ENCODE measurements at regions of chr13 and their contacts with region 1.

Region 1: DNA sequence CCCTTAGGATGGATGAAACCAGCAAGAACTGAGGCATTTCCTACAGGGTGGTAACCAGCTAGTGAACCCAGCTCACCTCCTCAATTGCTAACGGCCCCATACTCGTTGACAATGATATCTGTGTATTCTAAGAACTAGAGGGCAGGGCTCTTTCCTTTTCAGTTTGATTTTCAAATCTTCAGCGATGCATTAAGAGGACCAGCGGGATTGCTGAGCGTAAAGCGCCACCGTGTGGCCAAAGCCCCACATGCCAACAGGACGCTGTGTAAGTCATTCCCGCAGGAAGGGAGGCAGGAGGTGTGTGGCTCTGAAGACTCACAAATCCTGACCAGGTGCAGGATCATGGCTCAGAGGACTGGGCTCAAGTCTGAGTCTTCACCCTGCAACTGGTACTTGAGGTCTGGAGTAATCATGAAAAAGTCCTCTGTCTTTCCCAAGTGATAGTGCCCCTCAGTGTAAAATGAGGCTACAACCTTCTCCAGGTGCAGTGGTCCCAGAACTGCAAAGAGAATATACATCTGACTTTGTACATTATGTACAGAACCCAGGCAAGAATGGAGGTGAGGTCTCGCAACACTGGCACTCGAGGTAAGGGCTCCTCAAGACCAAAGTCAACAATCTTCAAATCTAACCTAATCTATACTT is 40.9 kb downstream of the C13orf42 start:
- DNase-seq: peak; percentile 86
- ATAC-seq: peak; percentile 93
- H3K4me3 Mint-ChIP-seq: no peak overlapping the region
- H3K27ac Mint-ChIP-seq: peak overlapping the region; percentile 53
- H3K4me1 Mint-ChIP-seq: peaks cover 45% of the 10 kb centered on the region
- H3K27me3 Mint-ChIP-seq: peaks cover 16% of the 10 kb centered on the region

Region 2: GRCh38 chr13:49976314-49977258 is 1093.5 kb before region 1 on chr13:
- CTCF ChIA-PET with region 1: interaction called, 22 read pairs
- POLR2A ChIA-PET with region 1: no interaction called
- DNase-seq: peak; percentile 81
- ATAC-seq: peak; percentile 81
- H3K4me3 Mint-ChIP-seq: no peak overlapping the region
- H3K27ac Mint-ChIP-seq: no peak overlapping the region
- H3K4me1 Mint-ChIP-seq: peaks cover 4% of the 10 kb centered on the region
- H3K27me3 Mint-ChIP-seq: no peaks in the 10 kb centered on the region

Region 3: GRCh38 chr13:50991579-50992521 is 78.3 kb before region 1 on chr13:
- CTCF ChIA-PET with region 1: interaction called, 15 read pairs
- POLR2A ChIA-PET with region 1: interaction called, 4 read pairs
- DNase-seq: peak; percentile 70
- ATAC-seq: peak; percentile 88
- H3K4me3 Mint-ChIP-seq: peak overlapping the region; percentile 34
- H3K27ac Mint-ChIP-seq: peak overlapping the region; percentile 69
- H3K4me1 Mint-ChIP-seq: peaks cover 27% of the 10 kb centered on the region
- H3K27me3 Mint-ChIP-seq: no peaks in the 10 kb centered on the region

Region 4: DNA sequence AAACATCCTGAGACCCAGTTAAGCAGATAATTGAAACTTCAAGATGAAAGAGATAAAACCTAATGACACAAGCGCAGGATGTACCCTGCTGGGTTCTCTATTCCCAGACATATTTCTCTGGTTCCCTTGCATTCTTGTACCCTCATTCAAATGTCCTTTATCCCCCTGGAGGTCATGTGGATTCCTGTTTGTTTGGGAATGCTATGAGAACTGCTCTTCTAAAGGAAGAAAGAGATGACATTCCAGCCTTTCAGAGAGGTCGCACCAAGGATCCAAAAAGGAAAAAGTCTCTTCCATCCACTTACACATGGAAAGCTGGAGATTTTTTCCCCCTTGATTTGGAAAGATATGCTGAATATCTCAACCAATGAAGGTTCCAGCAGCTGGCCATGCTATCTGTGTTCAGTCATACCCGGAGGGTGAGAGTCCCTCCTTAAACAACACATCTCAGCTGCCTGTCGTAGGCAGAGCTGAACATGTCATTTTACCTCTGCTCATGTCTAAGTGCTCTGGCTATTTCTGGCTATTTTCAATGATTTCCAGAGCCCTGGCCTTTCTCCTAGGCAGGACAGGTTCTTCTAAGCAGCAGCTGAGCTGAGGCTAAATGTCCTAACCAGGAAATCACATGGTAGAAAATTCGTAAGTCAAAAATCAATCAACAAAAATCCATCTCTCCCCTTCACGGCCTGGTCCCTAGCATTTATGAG is 11.5 kb before region 1 on chr13:
- CTCF ChIA-PET with region 1: interaction called, 12 read pairs
- POLR2A ChIA-PET with region 1: no interaction called
- DNase-seq: no peak
- ATAC-seq: no peak
- H3K4me3 Mint-ChIP-seq: no peak overlapping the region
- H3K27ac Mint-ChIP-seq: no peak overlapping the region
- H3K4me1 Mint-ChIP-seq: no peaks in the 10 kb centered on the region
- H3K27me3 Mint-ChIP-seq: peaks cover 7% of the 10 kb centered on the region

Region 5: DNA sequence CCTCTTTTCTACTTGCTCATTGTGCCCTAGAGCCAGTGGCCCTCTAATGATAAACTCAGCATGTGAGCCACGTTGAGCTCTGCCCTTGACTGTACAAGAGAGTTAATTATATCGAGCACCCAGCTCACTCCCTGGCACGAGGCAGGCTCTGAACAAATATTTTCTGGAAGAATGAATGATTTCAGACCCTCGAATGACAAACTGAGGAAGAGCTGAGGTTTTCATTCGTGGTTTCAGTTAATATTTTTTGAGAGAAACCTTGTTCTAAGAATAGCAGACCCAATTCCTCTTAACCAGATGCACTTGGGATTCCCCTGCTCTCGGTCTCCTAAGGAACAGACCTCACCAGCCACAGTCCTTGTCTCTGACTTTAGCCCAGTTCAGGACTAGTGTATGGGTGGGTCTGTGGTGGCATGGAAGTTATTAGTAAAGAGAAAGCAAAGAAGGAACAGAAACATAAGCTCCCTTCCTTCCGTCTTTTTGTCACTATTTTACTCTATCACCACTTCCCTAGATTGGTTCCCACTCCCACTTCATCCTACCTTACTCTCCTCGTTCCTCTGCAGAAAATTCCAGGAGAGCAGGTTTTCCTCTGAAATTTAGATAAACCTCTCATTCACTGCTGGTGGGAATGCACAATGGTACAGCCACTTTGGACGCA is 492.0 kb after region 1 on chr13:
- CTCF ChIA-PET with region 1: no interaction called
- POLR2A ChIA-PET with region 1: no interaction called
- DNase-seq: no peak
- ATAC-seq: peak; percentile 68
- H3K4me3 Mint-ChIP-seq: no peak overlapping the region
- H3K27ac Mint-ChIP-seq: peak overlapping the region; percentile 41
- H3K4me1 Mint-ChIP-seq: peaks cover 39% of the 10 kb centered on the region
- H3K27me3 Mint-ChIP-seq: no peaks in the 10 kb centered on the region

Measured in activated CD8-positive, alpha-beta T cell treated with anti-CD3 and anti-CD28 coated beads, Interleukin-2, amount 10 ng/mL, durations not matched to agents 7 days and 5 days (primary cell).